Heart left ventricle (tissue), 16 donors: ENCODE measurements at regions of chr6 and their contacts with region 1.

Region 1: GRCh38 chr6:52361945-52362442 is at the start of gene PAQR8:
- DNase-seq: peak; percentile 85 to 93 (median 88)
- ATAC-seq: peak; percentile 83 to 99 (median 96)
- H3K4me3 ChIP-seq: peak within 1 kb of the TSS; percentile 69 to 95 (median 88)
- H3K27ac ChIP-seq: peak within 1 kb of the TSS; percentile 49 to 90 (median 82)
- H3K4me1 ChIP-seq: peaks cover 0 to 25% (median 14%) of the 10 kb centered on the region in 12 donors
- H3K27me3 ChIP-seq: no peaks in the 10 kb centered on the region
- CTCF ChIP-seq: peak in 1 of 12 donors; percentile 4
- POLR2A ChIP-seq: peak in 1 of 2 donors; percentile 67
- total RNA-seq, gene PAQR8: 1.8 to 7.5 (median 3.6) TPM

Region 2: GRCh38 chr6:52284460-52285176 is 77.4 kb before region 1 on chr6 and contains the start of gene MCM3:
- intact Hi-C with region 1: loop called in 7 of 10 experiments (anchors 2 to 10 kb)
- DNase-seq: peak; percentile 96 to 98 (median 98)
- ATAC-seq: peak; percentile 100
- H3K4me3 ChIP-seq: peak within 1 kb of the TSS; percentile 57 to 99 (median 80)
- H3K27ac ChIP-seq: peak within 1 kb of the TSS in 11 of 12 donors; percentile 32 to 79 (median 67)
- H3K4me1 ChIP-seq: peaks cover 0 to 32% (median 12%) of the 10 kb centered on the region in 12 donors
- H3K27me3 ChIP-seq: no peaks in the 10 kb centered on the region
- CTCF ChIP-seq: peak in 5 of 12 donors; percentile 2 to 43 (median 19)
- POLR2A ChIP-seq: peak in 1 of 2 donors; percentile 50
- total RNA-seq, gene MCM3: 18.5 to 36.5 (median 25.0) TPM

Region 3: GRCh38 chr6:52297433-52297832 is 64.6 kb before region 1 on chr6:
- intact Hi-C with region 1: loop called in 2 of 10 experiments (anchors 5 kb)
- DNase-seq: no peak
- ATAC-seq: no peak
- H3K4me3 ChIP-seq: no peak overlapping the region
- H3K27ac ChIP-seq: no peak overlapping the region
- H3K4me1 ChIP-seq: no peaks in the 10 kb centered on the region
- H3K27me3 ChIP-seq: no peaks in the 10 kb centered on the region
- CTCF ChIP-seq: no peak
- POLR2A ChIP-seq: no peak

Region 4: GRCh38 chr6:52304983-52305390 is 57.0 kb before region 1 on chr6:
- intact Hi-C with region 1: loop called in 1 of 10 experiments (anchors 5 kb)
- DNase-seq: no peak
- ATAC-seq: peak in 3 of 4 donors; percentile 71 to 81 (median 76)
- H3K4me3 ChIP-seq: peak overlapping the region in 3 of 12 donors; percentile 4 to 7 (median 6)
- H3K27ac ChIP-seq: peak overlapping the region in 8 of 12 donors; percentile 3 to 90 (median 36)
- H3K4me1 ChIP-seq: peaks cover 0 to 56% (median 15%) of the 10 kb centered on the region in 12 donors
- H3K27me3 ChIP-seq: no peaks in the 10 kb centered on the region
- CTCF ChIP-seq: no peak
- POLR2A ChIP-seq: no peak

Region 5: GRCh38 chr6:52537001-52537753 is 175.2 kb after region 1 on chr6:
- intact Hi-C with region 1: no loop called
- DNase-seq: no peak
- ATAC-seq: peak in 2 of 4 donors; percentile 34 to 62
- H3K4me3 ChIP-seq: no peak overlapping the region
- H3K27ac ChIP-seq: peak overlapping the region in 1 of 12 donors; percentile 15
- H3K4me1 ChIP-seq: peaks cover 0 to 55% (median 38%) of the 10 kb centered on the region in 12 donors
- H3K27me3 ChIP-seq: no peaks in the 10 kb centered on the region
- CTCF ChIP-seq: no peak
- POLR2A ChIP-seq: no peak